Transverse colon (tissue), 4 donors: ENCODE measurements at regions of chr4 and their contacts with region 1.

Region 1: DNA sequence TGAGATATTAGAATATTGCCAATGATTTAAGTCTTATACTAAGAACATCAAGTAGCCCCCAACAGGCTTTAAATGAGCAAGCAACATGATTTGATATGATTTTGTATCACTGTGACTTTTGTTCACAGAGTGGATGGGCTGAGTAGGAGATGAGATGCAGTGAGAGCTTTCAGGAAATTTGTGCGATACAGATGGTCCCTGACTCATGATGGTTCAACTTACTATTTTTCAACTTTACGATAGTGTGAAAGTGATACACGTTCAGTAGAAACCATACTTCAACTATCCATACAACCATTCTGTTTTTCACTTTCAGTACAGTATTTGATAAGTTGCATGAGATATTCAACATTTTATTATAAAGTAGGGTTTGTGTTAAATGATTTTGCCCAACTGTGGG is 78.7 kb upstream of the NWD2 start:
- DNase-seq: no peak
- H3K4me3 ChIP-seq: no peak overlapping the region
- H3K27ac ChIP-seq: no peak overlapping the region
- H3K4me1 ChIP-seq: no peaks in the 10 kb centered on the region
- H3K27me3 ChIP-seq: no peaks in the 10 kb centered on the region
- CTCF ChIP-seq: no peak
- EP300 ChIP-seq: no peak
- POLR2A ChIP-seq: no peak

Region 2: GRCh38 chr4:37146260-37146659 is 19.6 kb before region 1 on chr4:
- in situ Hi-C with region 1: no loop called
- intact Hi-C with region 1: loop called (anchors 1 kb)
- DNase-seq: no peak
- H3K4me3 ChIP-seq: no peak overlapping the region
- H3K27ac ChIP-seq: no peak overlapping the region
- H3K4me1 ChIP-seq: no peaks in the 10 kb centered on the region
- H3K27me3 ChIP-seq: no peaks in the 10 kb centered on the region
- CTCF ChIP-seq: no peak
- EP300 ChIP-seq: no peak
- POLR2A ChIP-seq: no peak

Region 3: DNA sequence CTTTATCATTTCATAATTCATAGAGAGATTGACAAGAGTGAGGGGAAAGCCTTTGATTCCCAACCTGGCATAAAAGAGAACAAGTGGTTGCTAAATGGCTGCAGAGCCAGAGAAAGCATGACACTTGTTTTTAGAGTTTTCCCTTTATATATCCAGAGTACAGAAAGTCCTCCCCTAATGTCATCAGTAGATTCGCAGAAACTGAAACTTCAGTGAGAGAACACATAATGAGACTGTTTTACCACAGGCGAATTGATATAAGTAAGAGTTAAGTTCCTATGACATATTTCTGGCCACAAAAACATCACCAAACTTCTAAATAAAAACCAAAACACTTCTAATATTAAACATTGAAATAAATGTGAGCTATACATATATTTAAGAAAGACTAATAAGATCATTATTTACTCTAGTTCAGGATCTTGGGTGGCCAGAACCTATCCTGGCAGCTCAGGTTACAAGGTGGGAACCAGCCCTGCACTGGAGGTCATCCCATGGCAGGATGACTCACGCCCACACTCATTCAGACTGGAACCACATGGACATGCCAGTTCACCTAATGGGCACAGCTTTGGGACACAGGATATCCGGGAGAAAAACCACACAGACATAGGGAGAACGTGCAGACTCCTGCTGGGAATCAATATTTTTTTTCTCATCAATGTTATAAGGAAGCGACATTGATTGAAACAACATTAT is 114.2 kb after region 1 on chr4:
- in situ Hi-C with region 1: no loop called
- intact Hi-C with region 1: no loop called
- DNase-seq: no peak
- H3K4me3 ChIP-seq: no peak overlapping the region
- H3K27ac ChIP-seq: no peak overlapping the region
- H3K4me1 ChIP-seq: no peaks in the 10 kb centered on the region
- H3K27me3 ChIP-seq: no peaks in the 10 kb centered on the region
- CTCF ChIP-seq: no peak
- EP300 ChIP-seq: no peak
- POLR2A ChIP-seq: no peak